ENCODE measurements at regions of chr2 and their contacts with region 1.

Region 1: DNA sequence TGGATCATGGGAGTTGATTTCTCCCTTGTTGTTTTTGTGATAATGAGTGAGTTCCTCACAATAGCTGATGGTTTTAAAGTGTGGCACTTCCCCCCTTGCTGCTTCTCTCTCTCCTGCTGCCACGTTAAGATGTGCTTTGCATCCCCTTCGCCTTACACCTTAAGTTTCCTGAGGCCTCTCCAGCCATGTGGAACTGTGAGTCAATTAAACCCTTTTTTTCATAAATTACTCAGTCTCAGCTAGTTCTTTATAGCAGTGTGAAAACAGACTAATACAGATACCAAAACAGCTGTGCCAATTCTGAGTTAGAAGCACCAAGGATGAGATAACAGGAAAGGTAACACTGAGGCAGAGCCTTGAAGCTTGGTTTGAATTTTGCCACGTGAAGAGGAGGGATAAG is 44.7 kb downstream of the ITSN2 start:
- DNase-seq: peak; percentile 41
- H3K4me3 Mint-ChIP-seq: no peak overlapping the region
- H3K27ac Mint-ChIP-seq: no peak overlapping the region
- H3K4me1 Mint-ChIP-seq: peaks cover 36% of the 10 kb centered on the region
- H3K27me3 Mint-ChIP-seq: no peaks in the 10 kb centered on the region

Region 2: DNA sequence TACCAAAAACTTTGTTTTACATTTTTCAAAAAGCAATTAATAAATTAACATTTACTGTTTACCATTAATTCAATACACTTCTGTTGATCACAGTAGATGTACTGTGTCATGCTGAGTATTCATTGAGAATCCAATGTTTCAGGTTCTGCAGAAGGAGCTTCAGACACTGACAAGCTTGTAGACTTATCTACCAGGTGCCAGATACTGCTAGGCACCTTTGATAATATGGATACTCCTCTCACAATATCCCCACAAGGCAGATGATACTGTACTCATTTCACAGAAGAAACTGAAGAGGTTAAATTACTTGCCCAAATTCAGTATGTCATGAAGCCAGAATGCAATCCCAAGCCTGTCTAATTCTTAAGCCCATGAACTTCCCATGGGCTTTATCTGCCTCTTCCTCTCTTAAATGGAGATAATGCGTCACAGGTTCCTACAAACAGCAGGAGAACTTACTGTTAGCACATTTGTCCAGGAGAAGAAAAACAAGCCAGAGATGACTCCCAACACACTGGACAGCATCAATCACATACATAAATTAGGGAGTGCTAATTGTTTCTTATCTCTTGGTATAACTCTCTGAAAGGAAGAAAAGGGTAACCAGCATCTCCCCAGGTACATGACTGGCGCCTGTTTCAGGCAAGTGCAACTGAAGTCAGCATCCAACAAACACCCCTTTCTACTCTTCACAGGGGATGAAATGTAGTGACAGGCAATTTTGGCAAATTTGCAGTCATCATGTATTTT is 17.3 kb after region 1 on chr2:
- CTCF ChIA-PET with region 1: interaction called, 3 read pairs
- intact Hi-C with region 1: loop called (anchors 2 kb)
- DNase-seq: no peak
- H3K4me3 Mint-ChIP-seq: no peak overlapping the region
- H3K27ac Mint-ChIP-seq: no peak overlapping the region
- H3K4me1 Mint-ChIP-seq: peaks cover 47% of the 10 kb centered on the region
- H3K27me3 Mint-ChIP-seq: no peaks in the 10 kb centered on the region

Region 3: GRCh38 chr2:24360050-24360962 is 44.6 kb after region 1 on chr2 and contains the start of gene ITSN2:
- CTCF ChIA-PET with region 1: interaction called, 3 read pairs
- intact Hi-C with region 1: loop called (anchors 1 kb)
- DNase-seq: peak; percentile 84
- H3K4me3 Mint-ChIP-seq: peak within 1 kb of the TSS; percentile 82
- H3K27ac Mint-ChIP-seq: peak within 1 kb of the TSS; percentile 88
- H3K4me1 Mint-ChIP-seq: peaks cover 25% of the 10 kb centered on the region
- H3K27me3 Mint-ChIP-seq: no peaks in the 10 kb centered on the region
- total RNA-seq, gene ITSN2: 46.1 to 46.7 TPM